ENCODE measurements at regions of chr9 and their contacts with region 1.

Region 1: GRCh38 chr9:91101611-91102168 is 260.0 kb downstream of the AUH start:
- DNase-seq: peak; percentile 94
- H3K4me3 Mint-ChIP-seq: peak overlapping the region; percentile 62
- H3K27ac Mint-ChIP-seq: peak overlapping the region; percentile 81
- H3K4me1 Mint-ChIP-seq: peaks cover 77% of the 10 kb centered on the region
- H3K27me3 Mint-ChIP-seq: no peaks in the 10 kb centered on the region

Region 2: GRCh38 chr9:91071185-91071990 is 30.3 kb before region 1 on chr9:
- CTCF ChIA-PET with region 1: interaction called, 12 read pairs
- POLR2A ChIA-PET with region 1: interaction called, 40 read pairs
- DNase-seq: peak; percentile 83
- H3K4me3 Mint-ChIP-seq: peak overlapping the region; percentile 31
- H3K27ac Mint-ChIP-seq: peak overlapping the region; percentile 77
- H3K4me1 Mint-ChIP-seq: peaks cover 33% of the 10 kb centered on the region
- H3K27me3 Mint-ChIP-seq: no peaks in the 10 kb centered on the region

Region 3: GRCh38 chr9:91131433-91131839 is 29.7 kb after region 1 on chr9:
- CTCF ChIA-PET with region 1: interaction called, 5 read pairs
- POLR2A ChIA-PET with region 1: interaction called, 72 read pairs
- DNase-seq: peak; percentile 90
- H3K4me3 Mint-ChIP-seq: peak overlapping the region; percentile 62
- H3K27ac Mint-ChIP-seq: peak overlapping the region; percentile 99
- H3K4me1 Mint-ChIP-seq: peaks cover 61% of the 10 kb centered on the region
- H3K27me3 Mint-ChIP-seq: no peaks in the 10 kb centered on the region

Region 4: DNA sequence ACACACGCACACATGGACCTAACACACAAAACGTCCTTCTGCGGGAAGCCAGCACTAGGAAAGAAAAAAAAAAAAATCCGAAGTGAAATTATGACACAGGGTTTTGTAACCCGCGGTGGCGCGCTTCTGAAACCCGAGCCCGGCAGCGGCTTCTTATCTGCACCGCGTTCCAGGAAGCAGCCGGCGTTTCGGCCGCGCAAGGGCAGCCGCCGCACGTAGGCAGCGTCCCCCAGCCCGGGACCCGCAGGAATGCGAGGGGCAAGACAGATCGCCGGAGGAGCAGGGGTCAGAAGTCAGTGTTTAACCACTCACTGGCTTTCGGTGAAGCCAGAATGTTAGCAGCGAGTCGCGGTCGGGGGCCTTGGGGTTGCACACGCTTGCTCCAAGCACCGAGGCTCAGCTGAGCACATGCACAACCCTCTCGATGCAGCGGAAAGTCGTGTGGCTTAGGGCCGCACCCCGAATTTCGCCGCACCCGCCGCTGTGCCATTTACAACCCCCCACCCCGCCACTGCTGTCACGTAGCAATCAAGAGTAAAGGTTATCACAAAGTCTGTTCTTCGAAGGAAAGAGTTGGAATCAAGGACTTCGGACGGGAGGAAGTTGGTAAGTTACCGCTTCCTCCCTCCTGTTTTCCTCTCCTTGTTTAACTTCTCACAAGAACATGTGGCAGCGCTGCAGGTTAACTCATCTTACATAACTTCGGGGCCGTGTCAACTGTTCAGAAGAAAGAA is 92.1 kb after region 1 on chr9:
- CTCF ChIA-PET with region 1: interaction called, 3 read pairs
- POLR2A ChIA-PET with region 1: interaction called, 14 read pairs
- DNase-seq: peak; percentile 92
- H3K4me3 Mint-ChIP-seq: peak overlapping the region; percentile 77
- H3K27ac Mint-ChIP-seq: peak overlapping the region; percentile 98
- H3K4me1 Mint-ChIP-seq: peaks cover 75% of the 10 kb centered on the region
- H3K27me3 Mint-ChIP-seq: no peaks in the 10 kb centered on the region

Region 5: DNA sequence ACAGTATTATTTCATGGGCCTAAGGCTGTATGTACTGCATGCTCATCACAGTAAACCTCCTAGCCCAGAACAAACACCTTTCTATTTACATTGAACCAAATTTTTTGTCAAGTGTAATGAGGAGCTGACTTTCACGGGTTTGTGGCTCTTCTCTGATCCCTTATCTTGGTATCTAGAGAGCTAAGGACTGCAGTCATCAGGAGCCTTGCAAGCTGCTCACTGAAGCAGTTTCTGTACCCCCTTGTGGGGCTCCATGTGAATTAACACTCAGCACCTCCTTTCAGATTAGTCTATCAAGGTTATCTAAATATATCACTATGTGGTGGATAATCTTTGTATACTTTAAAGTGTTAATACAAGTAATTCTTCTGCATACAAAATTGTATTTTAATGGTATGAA is 151.8 kb after region 1 on chr9:
- CTCF ChIA-PET with region 1: interaction called, 5 read pairs
- POLR2A ChIA-PET with region 1: interaction called, 15 read pairs
- DNase-seq: peak; percentile 66
- H3K4me3 Mint-ChIP-seq: no peak overlapping the region
- H3K27ac Mint-ChIP-seq: no peak overlapping the region
- H3K4me1 Mint-ChIP-seq: peaks cover 56% of the 10 kb centered on the region
- H3K27me3 Mint-ChIP-seq: no peaks in the 10 kb centered on the region

Measured in activated CD4-positive, alpha-beta memory T cell treated with anti-CD3 and anti-CD28 coated beads, Interleukin-2, amount 10 ng/mL, durations not matched to agents 7 days and 5 days (primary cell).